ENCODE measurements at regions of chr7 and their contacts with region 1.

Region 1: GRCh38 chr7:144738708-144739314 is 97.0 kb downstream of the TPK1 start:
- DNase-seq: no peak
- H3K4me3 ChIP-seq: no peak overlapping the region
- H3K27ac ChIP-seq: no peak overlapping the region
- H3K4me1 ChIP-seq: no peaks in the 10 kb centered on the region
- H3K27me3 ChIP-seq: no peaks in the 10 kb centered on the region
- CTCF ChIP-seq: peak; percentile 82

Region 2: DNA sequence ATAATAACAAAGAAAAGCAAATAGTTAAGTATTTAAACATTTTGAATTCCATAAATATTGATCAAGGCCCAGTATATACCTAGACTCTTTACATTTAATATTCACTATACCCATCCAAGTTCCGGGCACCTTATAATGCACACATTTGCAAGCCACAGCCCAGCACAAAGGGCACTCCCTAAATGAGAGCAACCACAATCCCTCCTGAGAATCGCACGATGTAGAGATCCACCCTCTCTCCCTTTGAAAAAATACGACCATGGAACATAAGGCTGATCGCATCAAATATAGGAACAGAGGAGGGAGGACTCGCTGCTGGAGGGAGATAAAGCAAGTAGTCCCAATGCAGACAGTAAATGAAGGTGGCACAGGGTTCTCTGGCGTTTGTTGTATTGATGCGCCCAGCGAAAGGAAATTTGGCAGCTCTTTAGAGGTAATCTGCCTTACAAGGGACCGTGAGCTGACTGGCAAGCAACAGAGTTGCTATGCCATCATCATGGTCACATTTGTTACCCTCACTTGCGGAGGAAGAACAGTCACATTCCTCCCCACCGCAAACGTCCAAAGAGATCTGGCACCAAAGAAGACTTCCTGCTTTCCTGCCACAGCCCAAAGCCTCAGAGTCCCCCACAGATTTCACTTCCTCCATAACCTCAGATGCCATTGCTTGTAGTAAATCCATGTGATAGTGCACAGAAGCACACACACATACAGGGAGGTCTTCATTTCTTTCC is 1533.1 kb before region 1 on chr7:
- CTCF ChIA-PET with region 1: no interaction called
- POLR2A ChIA-PET with region 1: no interaction called
- intact Hi-C with region 1: no loop called
- DNase-seq: peak in 1 of 2 experiments; percentile 25
- H3K4me3 ChIP-seq: no peak overlapping the region
- H3K27ac ChIP-seq: no peak overlapping the region
- H3K4me1 ChIP-seq: no peaks in the 10 kb centered on the region
- H3K27me3 ChIP-seq: no peaks in the 10 kb centered on the region
- CTCF ChIP-seq: no peak

Region 3: GRCh38 chr7:146084086-146084485 is 1345.3 kb after region 1 on chr7:
- CTCF ChIA-PET with region 1: interaction called, 4 read pairs
- POLR2A ChIA-PET with region 1: no interaction called
- intact Hi-C with region 1: loop called (anchors 10 kb)
- DNase-seq: no peak
- H3K4me3 ChIP-seq: no peak overlapping the region
- H3K27ac ChIP-seq: no peak overlapping the region
- H3K4me1 ChIP-seq: no peaks in the 10 kb centered on the region
- H3K27me3 ChIP-seq: no peaks in the 10 kb centered on the region
- CTCF ChIP-seq: no peak